ENCODE measurements at regions of chr17 and their contacts with region 1.

Region 1: DNA sequence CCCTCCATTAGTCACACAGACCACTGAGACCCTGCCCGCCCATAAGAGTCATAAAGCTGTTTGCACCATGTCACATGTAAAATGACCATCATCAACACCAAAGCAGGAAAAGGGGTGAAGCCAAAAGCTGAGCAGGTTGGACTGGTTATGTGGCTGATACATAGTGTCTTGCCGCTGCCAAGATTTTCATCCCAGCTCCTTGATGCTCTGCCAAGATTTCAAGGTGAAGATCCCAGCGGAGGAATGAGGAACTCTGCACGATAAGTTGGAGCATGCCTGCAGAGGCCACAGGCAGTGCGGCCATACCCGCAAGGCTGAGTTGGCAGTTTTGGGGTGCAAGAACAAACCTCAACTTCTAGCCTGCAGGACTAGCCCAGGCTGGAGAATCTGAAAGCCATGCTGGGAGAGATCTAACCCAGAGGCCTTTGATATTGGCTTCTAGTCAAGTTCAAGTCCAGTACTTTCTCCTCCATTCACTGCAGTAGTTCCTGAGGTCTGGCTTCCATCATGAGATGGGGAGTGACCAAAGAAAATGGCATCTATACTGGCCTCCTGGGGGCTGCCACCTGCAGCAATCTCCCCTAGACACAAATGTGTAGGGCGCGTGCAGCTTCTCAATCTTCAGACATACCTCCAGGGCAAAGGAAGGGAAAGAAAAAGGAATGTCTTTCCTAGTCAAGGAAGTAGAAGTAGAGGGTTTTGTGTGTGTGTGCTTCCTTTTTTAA is 79.7 kb upstream of the NOL11 start:
- DNase-seq: no peak
- ATAC-seq: no peak

Region 2: GRCh38 chr17:67671492-67671891 is 33.4 kb after region 1 on chr17:
- intact Hi-C with region 1: loop called (anchors 5 kb)
- DNase-seq: no peak
- ATAC-seq: no peak

Region 3: GRCh38 chr17:67689534-67690177 is 51.6 kb after region 1 on chr17:
- intact Hi-C with region 1: loop called (anchors 5 kb)
- DNase-seq: no peak
- ATAC-seq: peak; percentile 44

Region 4: DNA sequence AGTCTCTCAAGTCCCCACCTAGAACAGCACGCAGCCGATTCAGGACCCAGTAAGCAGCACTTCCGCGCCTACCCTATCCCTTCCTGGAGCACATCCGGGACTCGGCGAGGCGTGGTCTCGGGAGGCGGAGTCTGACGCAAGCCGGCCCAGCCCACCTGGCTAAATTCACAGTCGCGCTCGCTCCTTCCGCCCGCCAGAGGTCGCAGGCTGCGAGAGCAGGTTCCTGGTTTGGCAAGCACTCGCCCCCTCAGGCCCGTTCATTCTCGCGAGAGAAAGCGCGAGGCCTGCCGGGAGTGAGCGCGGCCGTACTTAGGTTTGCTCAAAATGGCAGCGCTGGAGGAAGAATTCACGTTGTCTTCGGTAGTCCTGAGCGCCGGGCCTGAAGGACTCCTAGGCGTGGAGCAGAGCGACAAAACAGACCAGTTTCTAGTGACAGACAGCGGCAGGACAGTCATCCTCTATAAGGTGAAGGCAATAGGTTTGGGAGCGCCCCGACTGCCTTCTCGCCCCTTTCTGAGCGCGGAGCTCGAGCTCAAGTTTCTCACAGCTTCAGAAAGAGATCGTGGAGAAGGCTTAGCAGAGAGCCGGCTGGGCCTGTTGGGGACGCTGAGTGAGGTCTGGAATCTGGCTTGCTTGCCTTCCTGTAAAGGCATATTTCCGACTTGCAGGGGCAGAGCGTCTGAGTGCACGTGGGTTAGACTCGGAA is 79.7 kb after region 1 on chr17 and contains the start of gene NOL11:
- intact Hi-C with region 1: no loop called
- DNase-seq: peak; percentile 99
- ATAC-seq: peak; percentile 99
- total RNA-seq, gene NOL11: 25.0 TPM